BJ (cell line): ENCODE measurements at regions of chr12 and their contacts with region 1.

Region 1: GRCh38 chr12:57766464-57767304 is at the start of gene CYP27B1:
- DNase-seq: no peak
- H3K4me3 ChIP-seq: peak within 1 kb of the TSS; percentile 11
- H3K27me3 ChIP-seq: peaks cover 8% of the 10 kb centered on the region; the same call in 1 of the 2 replicates
- CTCF ChIP-seq: 0 out of 2 replicates have a peak, but pooled peaks have one; percentile 5
- polyA plus RNA-seq, gene CYP27B1: 0.76 and 0.91 TPM in 2 replicates

Region 2: GRCh38 chr12:57756406-57757341 is 10.0 kb before region 1 on chr12:
- CTCF ChIA-PET with region 1: interaction called, 12 read pairs
- POLR2A ChIA-PET with region 1: no interaction called
- DNase-seq: no peak
- H3K4me3 ChIP-seq: no peak overlapping the region
- H3K27me3 ChIP-seq: peaks cover 6% of the 10 kb centered on the region
- CTCF ChIP-seq: peak; percentile 54